GM12878 (cell line): ENCODE measurements at regions of chrX and their contacts with region 1.

Region 1: GRCh38 chrX:72604112-72604511 is 31.5 kb upstream of the HDAC8 start:
- DNase-seq: no peak
- ATAC-seq: peak; percentile 26; the same call in 1 of the 3 replicates
- H3K4me3 ChIP-seq: no peak overlapping the region
- H3K27ac ChIP-seq: no peak overlapping the region
- H3K4me1 ChIP-seq: no peaks in the 10 kb centered on the region
- H3K27me3 ChIP-seq: no peaks in the 10 kb centered on the region; a peak in 1 of 4 replicates
- CTCF ChIP-seq: no peak
- EP300 ChIP-seq: no peak
- POLR2A ChIP-seq: no peak
- RAD21 ChIP-seq: no peak

Region 2: DNA sequence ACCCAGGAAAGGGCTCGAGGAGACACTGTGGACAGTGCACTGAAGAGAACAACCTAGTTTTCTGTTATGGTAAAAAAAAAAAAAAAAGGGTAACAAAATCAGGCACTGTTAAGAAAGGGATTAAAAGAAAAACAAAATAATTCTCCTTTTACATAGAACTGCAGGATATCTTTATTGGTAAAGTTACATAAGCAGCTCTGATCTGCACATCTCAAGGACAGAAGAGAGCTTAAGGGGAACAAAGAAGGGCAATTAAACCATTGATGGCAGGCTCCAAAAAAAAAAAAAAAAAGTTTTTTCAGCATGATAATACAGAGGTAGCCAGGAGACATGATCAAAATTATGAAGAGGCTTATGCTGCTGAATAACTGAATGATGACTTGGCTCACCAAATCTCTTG is 116.5 kb before region 1 on chrX:
- CTCF ChIA-PET with region 1: no interaction called
- POLR2A ChIA-PET with region 1: no interaction called
- RAD21 ChIA-PET with region 1: no interaction called
- SMC1A ChIA-PET with region 1: no interaction called
- in situ Hi-C with region 1: no loop called
- intact Hi-C with region 1: no loop called
- DNase-seq: no peak
- ATAC-seq: no peak
- H3K4me3 ChIP-seq: no peak overlapping the region
- H3K27ac ChIP-seq: no peak overlapping the region
- H3K4me1 ChIP-seq: no peaks in the 10 kb centered on the region
- H3K27me3 ChIP-seq: no peaks in the 10 kb centered on the region
- CTCF ChIP-seq: no peak
- EP300 ChIP-seq: no peak
- POLR2A ChIP-seq: no peak
- RAD21 ChIP-seq: no peak

Region 3: DNA sequence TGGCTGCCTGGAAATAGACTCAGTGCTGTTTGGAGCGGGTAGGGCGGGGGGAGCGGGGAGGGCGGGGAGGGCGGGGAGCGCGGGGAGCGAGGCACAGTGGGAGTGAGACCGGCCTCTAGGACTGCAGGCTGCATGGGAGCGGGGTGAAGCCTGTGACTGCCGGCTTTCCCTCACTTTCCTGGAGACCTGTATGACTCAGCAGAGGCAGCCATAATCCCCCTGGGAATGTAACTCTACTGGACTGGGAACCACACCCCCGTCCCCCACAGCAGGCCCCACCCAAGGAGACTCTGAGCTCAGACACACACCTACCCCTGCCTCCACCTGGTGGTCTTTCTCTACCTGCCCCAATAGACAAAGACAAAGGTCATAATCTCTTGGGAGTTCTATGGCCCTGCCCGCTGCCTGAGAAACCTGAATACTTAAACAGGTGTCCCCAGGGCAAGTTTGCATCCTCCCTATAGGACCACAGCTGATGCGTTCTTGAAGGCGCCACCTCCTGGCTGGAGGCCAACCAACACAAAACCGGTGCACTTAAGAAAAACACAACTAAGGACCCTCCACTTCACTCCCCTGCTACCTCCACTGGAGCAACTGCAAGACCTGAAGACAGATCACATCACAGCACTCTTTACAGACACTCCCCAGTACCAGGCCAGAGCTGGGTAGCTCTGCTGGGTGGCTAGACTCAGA is 49.5 kb before region 1 on chrX:
- CTCF ChIA-PET with region 1: no interaction called
- POLR2A ChIA-PET with region 1: no interaction called
- RAD21 ChIA-PET with region 1: no interaction called
- SMC1A ChIA-PET with region 1: no interaction called
- in situ Hi-C with region 1: no loop called
- intact Hi-C with region 1: no loop called
- DNase-seq: no peak
- ATAC-seq: no peak
- H3K4me3 ChIP-seq: no peak overlapping the region
- H3K27ac ChIP-seq: no peak overlapping the region
- H3K4me1 ChIP-seq: no peaks in the 10 kb centered on the region
- H3K27me3 ChIP-seq: no peaks in the 10 kb centered on the region
- CTCF ChIP-seq: no peak
- EP300 ChIP-seq: no peak
- POLR2A ChIP-seq: no peak
- RAD21 ChIP-seq: no peak

Region 4: GRCh38 chrX:72652082-72652481 is 48.0 kb after region 1 on chrX:
- CTCF ChIA-PET with region 1: no interaction called
- POLR2A ChIA-PET with region 1: no interaction called
- RAD21 ChIA-PET with region 1: no interaction called
- SMC1A ChIA-PET with region 1: no interaction called
- in situ Hi-C with region 1: loop called (anchors 5 kb)
- intact Hi-C with region 1: no loop called
- DNase-seq: no peak
- ATAC-seq: no peak
- H3K4me3 ChIP-seq: no peak overlapping the region
- H3K27ac ChIP-seq: no peak overlapping the region
- H3K4me1 ChIP-seq: no peaks in the 10 kb centered on the region
- H3K27me3 ChIP-seq: no peaks in the 10 kb centered on the region
- CTCF ChIP-seq: no peak
- EP300 ChIP-seq: no peak
- POLR2A ChIP-seq: no peak
- RAD21 ChIP-seq: no peak